WTC11 (cell line): ENCODE measurements at regions of chr17 and their contacts with region 1.

Region 1: GRCh38 chr17:30696234-30696633 is 128.3 kb downstream of the CRLF3 start:
- DNase-seq: no peak
- ATAC-seq: no peak
- H3K4me3 Mint-ChIP-seq: no peak overlapping the region
- H3K27ac Mint-ChIP-seq: no peak overlapping the region
- H3K4me1 Mint-ChIP-seq: peaks cover 27% of the 10 kb centered on the region
- H3K27me3 Mint-ChIP-seq: peaks cover 10% of the 10 kb centered on the region
- CTCF ChIP-seq: no peak

Region 2: GRCh38 chr17:30716461-30717300 is 20.4 kb after region 1 on chr17:
- CTCF ChIA-PET with region 1: interaction called, 10 read pairs
- POLR2A ChIA-PET with region 1: no interaction called
- DNase-seq: peak; percentile 19
- ATAC-seq: peak; percentile 12
- H3K4me3 Mint-ChIP-seq: no peak overlapping the region
- H3K27ac Mint-ChIP-seq: peak overlapping the region; percentile 27; the same call in 1 of the 2 replicates
- H3K4me1 Mint-ChIP-seq: peaks cover 40% of the 10 kb centered on the region
- H3K27me3 Mint-ChIP-seq: no peaks in the 10 kb centered on the region; the same call in 1 of the 2 replicates
- CTCF ChIP-seq: no peak